ENCODE measurements at regions of chr12 and their contacts with region 1.

Region 1: GRCh38 chr12:122051231-122051876 is 27.2 kb upstream of the MLXIP start:
- DNase-seq: no peak
- ATAC-seq: no peak
- H3K4me3 Mint-ChIP-seq: no peak overlapping the region
- H3K27ac Mint-ChIP-seq: no peak overlapping the region
- H3K4me1 Mint-ChIP-seq: peaks cover 6% of the 10 kb centered on the region
- H3K27me3 Mint-ChIP-seq: no peaks in the 10 kb centered on the region

Region 2: DNA sequence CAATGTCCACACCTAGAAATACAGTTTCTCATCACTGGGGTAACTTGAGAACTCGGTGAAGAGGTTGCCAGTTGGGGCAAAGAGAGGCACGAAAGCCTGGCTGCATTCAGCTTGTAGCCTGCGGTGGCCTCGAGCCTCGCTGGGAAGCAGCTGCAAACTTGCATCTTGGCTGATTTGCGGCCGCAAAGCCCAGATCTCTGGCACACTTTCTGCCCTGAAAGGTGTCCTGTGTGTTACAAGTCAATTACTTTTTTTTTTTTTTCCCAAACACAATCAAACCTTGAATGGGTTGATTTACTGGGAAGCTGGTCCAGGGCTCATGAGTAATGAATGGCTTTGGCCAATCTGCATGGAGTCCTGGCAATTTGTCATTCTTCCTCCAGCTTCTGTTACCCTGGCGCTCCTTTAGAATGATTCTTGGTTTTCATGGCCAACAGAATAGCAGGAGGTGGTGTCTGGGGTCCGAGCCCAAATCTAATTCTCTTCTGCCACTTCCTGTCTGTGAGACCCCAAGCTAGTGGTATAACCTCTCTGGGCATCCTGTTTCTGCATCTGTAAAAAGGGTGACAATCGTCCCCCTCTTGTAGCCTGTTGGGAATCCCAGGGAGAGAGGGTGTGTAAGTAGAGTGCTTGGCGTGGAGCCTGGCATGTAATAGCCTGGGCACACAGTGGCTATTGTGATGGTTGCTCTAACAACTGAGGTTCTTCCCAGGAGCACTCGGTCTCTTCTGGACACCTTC is 23.0 kb before region 1 on chr12:
- CTCF ChIA-PET with region 1: no interaction called
- POLR2A ChIA-PET with region 1: no interaction called
- intact Hi-C with region 1: no loop called
- DNase-seq: no peak
- ATAC-seq: no peak
- H3K4me3 Mint-ChIP-seq: no peak overlapping the region
- H3K27ac Mint-ChIP-seq: no peak overlapping the region
- H3K4me1 Mint-ChIP-seq: peaks cover 7% of the 10 kb centered on the region
- H3K27me3 Mint-ChIP-seq: peaks cover 1% of the 10 kb centered on the region

Region 3: DNA sequence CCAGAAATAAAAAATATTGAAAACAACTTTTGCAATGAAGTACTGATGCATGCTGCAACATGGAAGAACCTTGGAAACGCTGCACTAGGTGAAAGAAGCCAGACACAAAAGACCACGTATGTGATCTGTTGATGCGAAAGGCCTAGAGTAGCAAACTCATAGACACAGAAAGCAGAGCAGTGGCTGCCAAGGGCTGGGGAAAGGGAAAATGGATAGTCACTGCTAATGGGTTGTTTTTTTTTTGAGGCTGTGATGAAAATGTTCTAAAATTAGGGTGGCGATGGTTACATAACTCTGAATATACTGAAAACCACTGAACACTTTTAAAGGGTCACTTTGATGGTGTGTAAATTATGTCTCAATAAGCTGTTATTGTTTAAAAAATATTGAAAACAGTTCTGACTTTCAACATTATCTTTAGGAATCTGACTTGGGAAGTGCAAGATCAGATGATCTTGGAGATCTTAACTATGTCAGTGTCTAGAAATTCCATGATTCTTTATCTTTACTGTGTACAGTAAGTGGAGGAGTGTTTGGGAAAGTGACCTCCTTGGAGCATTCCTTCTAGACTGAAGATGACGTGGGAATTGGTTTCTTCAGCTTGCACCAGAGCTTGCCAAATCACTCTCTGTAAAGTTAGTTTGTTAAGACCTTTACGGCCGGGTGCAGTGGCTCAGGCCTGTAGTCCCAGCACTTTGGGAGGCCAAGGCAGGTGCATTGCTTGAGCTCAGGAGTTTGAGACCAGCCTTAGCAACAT is 39.6 kb after region 1 on chr12:
- CTCF ChIA-PET with region 1: interaction called, 14 read pairs
- POLR2A ChIA-PET with region 1: no interaction called
- intact Hi-C with region 1: no loop called
- DNase-seq: no peak
- ATAC-seq: no peak
- H3K4me3 Mint-ChIP-seq: no peak overlapping the region
- H3K27ac Mint-ChIP-seq: no peak overlapping the region
- H3K4me1 Mint-ChIP-seq: peaks cover 56% of the 10 kb centered on the region
- H3K27me3 Mint-ChIP-seq: no peaks in the 10 kb centered on the region

Region 4: GRCh38 chr12:122107261-122107660 is 55.9 kb after region 1 on chr12:
- CTCF ChIA-PET with region 1: interaction called, 10 read pairs
- POLR2A ChIA-PET with region 1: no interaction called
- intact Hi-C with region 1: no loop called
- DNase-seq: no peak
- ATAC-seq: no peak
- H3K4me3 Mint-ChIP-seq: no peak overlapping the region
- H3K27ac Mint-ChIP-seq: peak overlapping the region; percentile 63
- H3K4me1 Mint-ChIP-seq: peaks cover 82% of the 10 kb centered on the region
- H3K27me3 Mint-ChIP-seq: no peaks in the 10 kb centered on the region

Region 5: DNA sequence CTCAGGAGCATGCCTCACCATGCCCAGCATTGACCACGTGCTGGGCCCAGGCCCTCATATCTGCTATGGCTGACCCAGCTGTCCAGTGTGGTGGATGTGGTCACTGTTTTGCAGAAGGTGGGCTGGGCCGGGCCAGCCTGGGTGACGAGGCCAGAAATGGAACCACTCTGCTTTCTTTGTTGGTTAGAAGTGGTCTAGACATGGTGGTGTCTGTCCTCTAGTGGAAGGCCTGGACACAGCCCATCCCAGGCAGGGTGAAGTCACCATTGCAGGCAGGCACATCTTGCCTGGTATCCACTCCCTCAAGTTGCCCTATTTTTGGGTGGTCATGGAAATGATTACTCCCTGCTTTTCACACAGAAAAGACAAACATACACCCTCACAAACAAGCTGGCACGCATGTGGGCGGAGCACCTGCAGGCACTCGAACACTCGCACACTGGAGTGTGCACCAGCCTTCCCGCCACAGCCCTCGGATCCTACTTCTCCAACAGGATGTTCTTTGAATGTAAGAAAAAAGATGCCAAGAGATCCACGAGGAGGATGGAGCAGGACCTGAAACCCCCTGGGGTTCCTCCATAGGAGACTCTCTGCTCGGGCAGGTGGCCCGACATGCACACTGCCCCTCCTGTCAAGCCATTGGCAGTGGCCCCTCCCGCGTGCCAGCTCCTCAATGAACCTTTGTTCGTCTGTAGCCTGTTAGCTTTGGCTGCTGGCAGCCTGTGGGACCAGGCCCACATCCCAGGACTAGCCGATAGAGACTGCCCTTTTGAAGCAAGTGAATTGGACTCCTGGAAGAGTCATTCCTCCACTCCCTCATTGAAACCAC is 65.6 kb after region 1 on chr12:
- CTCF ChIA-PET with region 1: interaction called, 105 read pairs
- POLR2A ChIA-PET with region 1: no interaction called
- intact Hi-C with region 1: no loop called
- DNase-seq: no peak
- ATAC-seq: no peak
- H3K4me3 Mint-ChIP-seq: no peak overlapping the region
- H3K27ac Mint-ChIP-seq: no peak overlapping the region
- H3K4me1 Mint-ChIP-seq: peaks cover 25% of the 10 kb centered on the region
- H3K27me3 Mint-ChIP-seq: no peaks in the 10 kb centered on the region

Region 6: DNA sequence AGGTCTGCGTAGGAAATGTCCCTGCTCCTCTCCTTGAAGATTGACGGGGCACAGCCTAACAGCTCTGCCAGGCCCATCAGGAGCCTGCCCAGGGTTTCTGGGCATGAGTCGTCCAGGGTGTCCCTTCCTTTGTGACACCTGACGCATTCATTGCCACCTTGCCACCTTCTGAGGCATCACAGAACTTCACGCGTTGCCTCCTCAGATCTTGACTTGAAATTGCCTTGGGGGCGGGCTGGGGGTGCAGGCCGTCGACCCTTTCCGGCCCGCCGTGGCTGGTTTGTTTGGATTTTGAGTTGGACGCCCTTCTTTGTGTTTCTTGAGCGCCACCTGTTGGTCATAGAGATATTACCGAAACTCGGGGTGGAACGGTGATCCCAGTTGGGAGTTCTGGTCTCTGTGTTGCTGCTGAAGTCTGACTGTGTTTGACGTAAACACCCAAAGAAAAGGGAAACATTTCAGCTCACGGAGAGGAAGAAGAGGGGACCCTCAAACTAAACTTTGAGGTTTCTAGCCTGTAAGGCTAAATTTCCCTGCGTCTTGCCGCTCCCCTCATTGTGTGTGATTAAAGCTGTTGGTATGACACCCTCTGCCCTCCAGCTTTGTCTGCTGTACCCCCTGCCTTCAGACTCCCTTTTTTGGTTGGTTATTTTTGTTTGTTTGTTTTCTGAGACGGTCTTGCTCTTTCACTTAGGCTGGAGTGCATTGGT is 71.9 kb after region 1 on chr12:
- CTCF ChIA-PET with region 1: interaction called, 105 read pairs
- POLR2A ChIA-PET with region 1: no interaction called
- intact Hi-C with region 1: loop called (anchors 1 kb)
- DNase-seq: peak; percentile 84
- ATAC-seq: peak; percentile 81
- H3K4me3 Mint-ChIP-seq: no peak overlapping the region
- H3K27ac Mint-ChIP-seq: peak overlapping the region; percentile 85
- H3K4me1 Mint-ChIP-seq: peaks cover 34% of the 10 kb centered on the region
- H3K27me3 Mint-ChIP-seq: no peaks in the 10 kb centered on the region

Region 7: GRCh38 chr12:122190842-122191668 is 139.7 kb after region 1 on chr12:
- CTCF ChIA-PET with region 1: interaction called, 3 read pairs
- POLR2A ChIA-PET with region 1: no interaction called
- intact Hi-C with region 1: loop called (anchors 1 kb)
- DNase-seq: peak; percentile 86
- ATAC-seq: peak; percentile 93
- H3K4me3 Mint-ChIP-seq: no peak overlapping the region
- H3K27ac Mint-ChIP-seq: no peak overlapping the region
- H3K4me1 Mint-ChIP-seq: no peaks in the 10 kb centered on the region
- H3K27me3 Mint-ChIP-seq: peaks cover 2% of the 10 kb centered on the region

Region 8: DNA sequence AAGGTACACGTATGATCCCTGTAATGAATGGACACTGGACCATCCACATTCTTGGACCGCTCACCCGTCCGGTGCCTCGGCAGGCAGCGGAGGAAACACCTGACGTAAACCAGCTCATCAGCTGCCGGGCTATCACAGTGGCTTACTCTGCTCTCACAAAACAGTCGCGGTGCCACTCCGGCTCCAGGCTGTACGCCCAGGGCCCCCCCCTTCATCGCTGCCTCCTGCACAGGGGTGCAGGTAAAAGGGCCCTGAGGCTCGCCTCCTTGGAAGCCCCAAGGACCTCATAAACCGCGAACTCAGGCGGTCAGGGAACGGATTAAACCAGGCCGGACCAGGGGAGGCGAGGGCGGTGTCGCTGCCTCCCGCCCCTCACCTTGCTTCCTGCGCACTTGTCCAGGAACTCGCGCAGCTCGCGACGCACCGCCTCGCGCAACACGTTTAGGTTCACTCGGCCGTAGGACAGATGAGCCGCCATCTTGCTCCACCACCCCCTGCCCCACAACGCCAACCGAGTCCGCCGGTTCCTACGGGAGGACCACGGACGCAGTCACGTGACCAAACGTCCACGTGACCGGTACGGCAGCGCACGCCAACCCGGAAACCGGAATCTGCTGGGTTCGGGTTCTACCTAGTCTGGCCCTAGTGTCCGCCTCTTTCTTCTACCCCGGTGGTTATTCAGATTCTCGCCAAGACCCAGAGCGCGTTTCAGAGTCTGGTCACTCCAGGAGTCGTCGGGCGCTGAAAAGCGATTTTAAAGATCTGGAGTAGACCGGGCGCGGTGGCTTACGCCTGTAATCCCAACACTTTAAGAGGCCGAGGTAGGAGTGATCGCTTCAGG is 214.8 kb after region 1 on chr12 and contains the start of gene VPS33A:
- CTCF ChIA-PET with region 1: no interaction called
- POLR2A ChIA-PET with region 1: no interaction called
- intact Hi-C with region 1: no loop called
- DNase-seq: peak; percentile 98
- ATAC-seq: peak; percentile 86
- H3K4me3 Mint-ChIP-seq: peak within 1 kb of the TSS; percentile 97
- H3K27ac Mint-ChIP-seq: peak within 1 kb of the TSS; percentile 98
- H3K4me1 Mint-ChIP-seq: peaks cover 23% of the 10 kb centered on the region
- H3K27me3 Mint-ChIP-seq: no peaks in the 10 kb centered on the region
- total RNA-seq, gene VPS33A: 24.8 to 26.4 TPM

Region 9: GRCh38 chr12:122437656-122438121 is 386.3 kb after region 1 on chr12:
- CTCF ChIA-PET with region 1: no interaction called
- POLR2A ChIA-PET with region 1: no interaction called
- intact Hi-C with region 1: no loop called
- DNase-seq: no peak
- ATAC-seq: no peak
- H3K4me3 Mint-ChIP-seq: no peak overlapping the region
- H3K27ac Mint-ChIP-seq: no peak overlapping the region
- H3K4me1 Mint-ChIP-seq: no peaks in the 10 kb centered on the region
- H3K27me3 Mint-ChIP-seq: no peaks in the 10 kb centered on the region

Region 10: DNA sequence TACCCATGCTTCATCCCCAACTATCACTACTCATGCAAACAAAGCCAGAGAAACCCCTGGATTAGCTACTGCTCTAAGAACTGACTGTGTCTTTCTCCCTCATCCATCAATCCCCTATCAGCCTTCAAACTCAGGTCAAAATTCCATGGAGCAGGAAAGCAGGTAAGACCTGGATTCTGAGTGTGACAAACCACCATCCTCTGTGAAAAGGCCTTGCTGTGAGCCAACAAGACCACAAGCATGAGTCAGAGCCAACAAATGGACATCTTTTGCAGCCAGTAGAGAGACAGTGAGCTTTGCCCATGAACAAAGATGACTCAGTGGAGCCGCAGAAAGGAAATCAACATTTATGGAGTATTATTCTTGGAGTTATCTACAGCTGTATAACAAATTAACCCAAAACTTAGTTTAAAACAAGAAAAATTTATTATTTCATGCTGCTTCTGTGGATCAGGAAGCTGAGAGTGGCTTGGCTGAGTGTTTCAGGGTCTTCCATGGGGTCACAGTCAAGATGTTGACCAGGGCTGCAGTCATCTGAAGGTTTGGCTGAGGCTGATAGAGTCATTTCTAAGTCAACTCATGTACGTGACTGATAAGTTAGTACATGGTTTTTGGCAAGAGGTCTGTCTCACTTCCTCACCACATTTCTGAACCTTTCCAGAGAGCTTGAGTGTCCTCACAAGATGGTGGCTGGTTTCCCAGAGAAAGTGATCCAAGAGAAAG is 1038.4 kb after region 1 on chr12:
- CTCF ChIA-PET with region 1: no interaction called
- POLR2A ChIA-PET with region 1: no interaction called
- intact Hi-C with region 1: no loop called
- DNase-seq: no peak
- ATAC-seq: peak; percentile 66
- H3K4me3 Mint-ChIP-seq: no peak overlapping the region
- H3K27ac Mint-ChIP-seq: no peak overlapping the region
- H3K4me1 Mint-ChIP-seq: peaks cover 17% of the 10 kb centered on the region
- H3K27me3 Mint-ChIP-seq: no peaks in the 10 kb centered on the region